Panc1 (cell line): ENCODE measurements at regions of chr5 and their contacts with region 1.

Region 1: GRCh38 chr5:122091936-122092600 is 14.0 kb upstream of the LOX start:
- DNase-seq: no peak
- ATAC-seq: no peak
- H3K4me3 ChIP-seq: no peak overlapping the region
- H3K27ac ChIP-seq: no peak overlapping the region
- H3K4me1 ChIP-seq: no peaks in the 10 kb centered on the region
- H3K27me3 ChIP-seq: no peaks in the 10 kb centered on the region; the same call in none of the 2 replicates
- CTCF ChIP-seq: peak; percentile 58

Region 2: DNA sequence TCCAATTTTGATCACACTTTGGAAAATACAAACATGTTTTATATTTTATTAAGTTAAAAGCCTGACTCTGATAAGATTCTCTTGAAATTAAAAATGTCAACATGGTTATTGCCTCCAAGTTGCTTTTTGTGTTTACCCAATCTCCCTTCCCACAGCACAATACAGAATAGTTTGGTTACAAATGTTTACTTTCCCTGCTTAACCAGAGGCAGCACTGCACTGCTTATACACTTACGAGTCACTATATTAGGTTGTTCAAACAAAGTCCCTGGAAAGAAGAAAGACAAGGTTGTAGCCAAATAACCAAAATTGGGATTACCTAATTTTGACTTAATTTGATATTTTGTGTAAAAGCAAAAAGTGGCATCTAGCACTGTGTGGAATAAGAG is 104.4 kb before region 1 on chr5:
- CTCF ChIA-PET with region 1: no interaction called
- POLR2A ChIA-PET with region 1: no interaction called
- in situ Hi-C with region 1: no loop called
- intact Hi-C with region 1: no loop called
- DNase-seq: no peak
- ATAC-seq: no peak
- H3K4me3 ChIP-seq: no peak overlapping the region
- H3K27ac ChIP-seq: no peak overlapping the region
- H3K4me1 ChIP-seq: no peaks in the 10 kb centered on the region
- H3K27me3 ChIP-seq: no peaks in the 10 kb centered on the region
- CTCF ChIP-seq: no peak

Region 3: GRCh38 chr5:122112733-122113558 is 20.9 kb after region 1 on chr5:
- CTCF ChIA-PET with region 1: no interaction called
- POLR2A ChIA-PET with region 1: no interaction called
- in situ Hi-C with region 1: no loop called
- intact Hi-C with region 1: loop called (anchors 1 kb)
- DNase-seq: no peak
- ATAC-seq: no peak
- H3K4me3 ChIP-seq: no peak overlapping the region
- H3K27ac ChIP-seq: no peak overlapping the region
- H3K4me1 ChIP-seq: no peaks in the 10 kb centered on the region
- H3K27me3 ChIP-seq: no peaks in the 10 kb centered on the region; the same call in 1 of the 2 replicates
- CTCF ChIP-seq: no peak

Region 4: DNA sequence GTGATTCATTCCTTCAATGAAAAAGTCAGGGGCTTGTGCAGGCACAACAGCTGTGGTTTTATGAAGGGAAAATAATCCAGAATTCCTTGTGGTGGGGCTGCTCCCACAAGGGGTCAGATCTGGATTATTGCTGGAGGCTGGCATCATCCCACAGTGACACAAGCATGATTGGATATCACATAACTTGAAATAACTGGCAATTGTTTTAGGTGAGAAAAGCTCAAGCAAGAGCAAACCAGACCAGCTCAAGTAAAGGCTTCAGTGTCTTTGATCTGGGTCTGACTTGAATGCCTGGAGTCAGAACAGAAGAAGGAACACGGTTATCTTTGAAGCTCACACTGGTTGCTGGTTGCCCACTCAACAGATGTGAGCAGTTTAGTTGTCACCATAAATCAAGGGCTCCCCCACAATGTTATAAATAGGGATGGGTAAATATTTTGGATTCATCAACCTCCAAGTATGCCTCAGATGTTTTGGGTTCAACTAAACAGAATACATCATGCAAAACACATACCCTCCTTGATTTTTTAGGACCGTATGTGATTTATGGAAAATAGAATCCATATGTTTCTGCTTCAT is 34.2 kb after region 1 on chr5:
- CTCF ChIA-PET with region 1: no interaction called
- POLR2A ChIA-PET with region 1: no interaction called
- in situ Hi-C with region 1: no loop called
- intact Hi-C with region 1: no loop called
- DNase-seq: no peak
- ATAC-seq: no peak
- H3K4me3 ChIP-seq: no peak overlapping the region
- H3K27ac ChIP-seq: no peak overlapping the region
- H3K4me1 ChIP-seq: no peaks in the 10 kb centered on the region
- H3K27me3 ChIP-seq: no peaks in the 10 kb centered on the region
- CTCF ChIP-seq: no peak